Mammary epithelial cell (primary cell): ENCODE measurements at regions of chr6 and their contacts with region 1.

Region 1: DNA sequence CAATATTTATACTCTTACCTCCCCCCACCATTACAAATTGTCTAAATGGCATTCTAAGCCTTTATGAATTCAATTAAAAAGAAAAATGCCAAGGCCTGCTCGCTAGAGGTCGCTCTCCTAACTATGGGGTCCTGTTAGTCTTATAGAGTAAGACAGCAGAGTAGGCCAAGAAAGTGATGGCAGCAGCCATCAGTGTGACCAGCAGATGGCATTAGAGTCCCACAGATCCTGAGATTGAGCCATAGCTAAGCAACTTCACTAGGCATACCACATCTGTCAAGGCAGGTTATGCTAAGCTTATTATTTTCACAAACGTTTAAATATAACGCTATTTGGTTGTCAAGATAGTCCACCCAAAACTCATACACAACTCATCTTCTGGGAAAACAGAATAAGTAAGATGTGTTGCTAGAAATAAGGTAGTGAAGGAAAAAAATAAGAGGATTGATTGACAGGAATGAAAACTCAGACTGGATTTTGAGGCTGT is 57.6 kb upstream of the SCAF8 start:
- DNase-seq: peak; percentile 86
- H3K4me3 ChIP-seq: no peak overlapping the region
- H3K27ac ChIP-seq: no peak overlapping the region
- H3K4me1 ChIP-seq: no peaks in the 10 kb centered on the region
- H3K27me3 ChIP-seq: no peaks in the 10 kb centered on the region
- CTCF ChIP-seq: peak; percentile 100

Region 2: GRCh38 chr6:154156135-154156896 is 519.3 kb before region 1 on chr6:
- CTCF ChIA-PET with region 1: no interaction called
- dilution Hi-C with region 1: no loop called
- in situ Hi-C with region 1: no loop called
- intact Hi-C with region 1: loop called (anchors 1 kb)
- DNase-seq: no peak
- H3K4me3 ChIP-seq: no peak overlapping the region
- H3K27ac ChIP-seq: no peak overlapping the region
- H3K4me1 ChIP-seq: no peaks in the 10 kb centered on the region
- H3K27me3 ChIP-seq: no peaks in the 10 kb centered on the region
- CTCF ChIP-seq: peak; percentile 60 to 62

Region 3: GRCh38 chr6:154352898-154353585 is 322.6 kb before region 1 on chr6:
- CTCF ChIA-PET with region 1: no interaction called
- dilution Hi-C with region 1: no loop called
- in situ Hi-C with region 1: no loop called
- intact Hi-C with region 1: no loop called
- DNase-seq: no peak
- H3K4me3 ChIP-seq: no peak overlapping the region
- H3K27ac ChIP-seq: no peak overlapping the region
- H3K4me1 ChIP-seq: no peaks in the 10 kb centered on the region
- H3K27me3 ChIP-seq: peaks cover 2% of the 10 kb centered on the region
- CTCF ChIP-seq: no peak

Region 4: GRCh38 chr6:154721460-154721859 is 45.8 kb after region 1 on chr6:
- CTCF ChIA-PET with region 1: no interaction called
- dilution Hi-C with region 1: no loop called
- in situ Hi-C with region 1: no loop called
- intact Hi-C with region 1: loop called (anchors 2 kb)
- DNase-seq: peak; percentile 98
- H3K4me3 ChIP-seq: no peak overlapping the region
- H3K27ac ChIP-seq: peak overlapping the region; percentile 32
- H3K4me1 ChIP-seq: peaks cover 6% of the 10 kb centered on the region
- H3K27me3 ChIP-seq: peaks cover 7% of the 10 kb centered on the region
- CTCF ChIP-seq: no peak

Region 5: GRCh38 chr6:154733012-154733625 is 57.5 kb after region 1 on chr6 and contains the start of gene SCAF8:
- CTCF ChIA-PET with region 1: no interaction called
- dilution Hi-C with region 1: no loop called
- in situ Hi-C with region 1: no loop called
- intact Hi-C with region 1: loop called (anchors 1 kb)
- DNase-seq: peak; percentile 82
- H3K4me3 ChIP-seq: peak within 1 kb of the TSS; percentile 92 to 99 (median 97)
- H3K27ac ChIP-seq: peak within 1 kb of the TSS; percentile 91
- H3K4me1 ChIP-seq: peaks cover 10% of the 10 kb centered on the region
- H3K27me3 ChIP-seq: no peaks in the 10 kb centered on the region
- CTCF ChIP-seq: peak; percentile 65 to 71
- total RNA-seq, gene SCAF8: 31.8 to 36.9 TPM

Region 6: GRCh38 chr6:154800338-154800737 is 124.7 kb after region 1 on chr6:
- CTCF ChIA-PET with region 1: interaction called, 6 read pairs
- dilution Hi-C with region 1: loop called (anchors 25 kb)
- in situ Hi-C with region 1: loop called (anchors 5 kb)
- intact Hi-C with region 1: loop called (anchors 1 kb)
- DNase-seq: no peak
- H3K4me3 ChIP-seq: no peak overlapping the region
- H3K27ac ChIP-seq: no peak overlapping the region
- H3K4me1 ChIP-seq: no peaks in the 10 kb centered on the region
- H3K27me3 ChIP-seq: no peaks in the 10 kb centered on the region
- CTCF ChIP-seq: no peak

Region 7: GRCh38 chr6:154805288-154805911 is 129.8 kb after region 1 on chr6:
- CTCF ChIA-PET with region 1: interaction called, 6 read pairs
- dilution Hi-C with region 1: loop called (anchors 25 kb)
- in situ Hi-C with region 1: loop called (anchors 5 kb)
- intact Hi-C with region 1: loop called (anchors 1 kb)
- DNase-seq: peak; percentile 18
- H3K4me3 ChIP-seq: no peak overlapping the region
- H3K27ac ChIP-seq: no peak overlapping the region
- H3K4me1 ChIP-seq: no peaks in the 10 kb centered on the region
- H3K27me3 ChIP-seq: no peaks in the 10 kb centered on the region
- CTCF ChIP-seq: peak; percentile 21 to 54

Region 8: DNA sequence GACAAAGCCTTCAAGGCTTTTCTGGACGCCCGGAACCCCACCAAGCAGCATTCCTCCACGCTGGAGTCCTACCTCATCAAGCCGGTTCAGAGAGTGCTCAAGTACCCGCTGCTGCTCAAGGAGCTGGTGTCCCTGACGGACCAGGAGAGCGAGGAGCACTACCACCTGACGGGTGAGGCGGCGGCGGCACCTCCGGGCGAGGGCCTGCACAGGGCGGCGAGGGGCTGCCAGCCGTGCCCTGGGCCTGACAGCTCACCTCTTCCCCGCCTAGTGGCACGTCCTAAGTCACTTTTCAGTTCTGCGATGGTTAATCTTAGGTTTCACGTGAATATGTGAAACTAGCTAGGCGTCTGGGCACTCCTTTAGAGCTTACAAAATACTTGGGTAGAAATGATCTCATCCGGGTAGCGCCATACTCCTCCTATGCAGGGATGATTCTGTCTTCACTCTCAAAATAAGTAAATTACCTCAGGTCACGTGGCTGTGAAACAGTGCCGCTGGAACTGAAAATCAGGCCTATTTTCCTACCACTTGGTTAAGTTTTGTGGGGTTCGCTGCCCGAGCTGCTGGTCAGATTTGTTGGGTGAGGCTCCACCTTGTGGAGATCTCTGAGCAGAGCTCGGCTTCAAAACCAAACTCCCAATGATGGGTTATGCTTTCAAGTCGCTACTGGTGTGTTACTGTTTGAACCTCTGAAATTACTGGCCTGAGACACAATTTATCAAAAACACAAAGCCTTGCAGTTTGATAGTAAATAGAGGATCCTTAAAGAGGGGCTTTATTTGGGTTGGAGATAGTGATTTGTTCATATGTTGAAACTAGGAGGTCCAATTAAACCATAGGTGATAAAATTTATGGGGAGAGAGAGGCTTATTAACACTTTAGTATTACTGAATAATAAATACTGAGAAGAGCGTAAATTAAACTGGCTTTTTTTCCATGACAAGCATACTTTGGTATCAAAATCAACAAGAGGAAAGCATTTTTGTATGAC is 572.7 kb after region 1 on chr6:
- CTCF ChIA-PET with region 1: no interaction called
- dilution Hi-C with region 1: no loop called
- in situ Hi-C with region 1: no loop called
- intact Hi-C with region 1: loop called (anchors 5 kb)
- DNase-seq: peak; percentile 26
- H3K4me3 ChIP-seq: no peak overlapping the region
- H3K27ac ChIP-seq: no peak overlapping the region
- H3K4me1 ChIP-seq: peaks cover 6% of the 10 kb centered on the region
- H3K27me3 ChIP-seq: no peaks in the 10 kb centered on the region
- CTCF ChIP-seq: peak; percentile 59 to 82